HepG2 (cell line): ENCODE measurements at regions of chr12 and their contacts with region 1.

Region 1: DNA sequence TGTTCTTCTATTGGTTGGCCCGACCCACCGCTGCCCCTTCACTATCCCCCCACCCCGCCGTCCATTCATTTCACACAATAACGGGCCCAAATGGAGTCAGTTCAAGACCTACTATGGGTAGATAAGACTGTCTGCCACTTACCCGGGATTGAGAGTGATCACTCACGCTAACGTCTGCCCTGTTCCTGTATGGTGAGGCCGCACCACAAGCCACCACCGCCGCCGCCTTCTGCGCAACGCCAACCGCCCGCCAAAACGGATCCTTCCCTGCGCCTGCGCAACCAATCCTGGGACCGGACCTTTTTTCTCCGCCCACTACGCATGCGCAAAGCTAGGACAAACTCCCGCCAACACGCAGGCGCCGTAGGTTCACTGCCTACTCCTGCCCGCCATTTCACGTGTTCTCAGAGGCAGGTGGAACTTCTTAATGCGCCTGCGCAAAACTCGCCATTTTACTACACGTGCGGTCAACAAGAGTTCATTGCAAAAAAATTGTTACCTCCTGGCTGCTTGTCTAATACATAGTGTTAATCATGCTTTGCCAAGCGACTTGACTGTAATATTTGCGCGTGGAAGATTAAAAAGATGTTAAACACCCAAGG is at the start of gene CBX5:
- DNase-seq: peak; percentile 98
- ATAC-seq: peak; percentile 39
- H3K4me3 ChIP-seq: peak within 1 kb of the TSS; percentile 73 to 79 (median 76)
- H3K27ac ChIP-seq: peak within 1 kb of the TSS; percentile 96
- H3K4me1 ChIP-seq: peaks cover 64% of the 10 kb centered on the region
- H3K27me3 ChIP-seq: no peaks in the 10 kb centered on the region; a peak in 1 of 5 replicates
- CTCF ChIP-seq: no peak
- EP300 ChIP-seq: no peak
- POLR2A ChIP-seq: peak in 1 of 2 experiments; percentile 46; a peak in 2 of 4 replicates
- RAD21 ChIP-seq: 0 out of 2 replicates have a peak, but pooled peaks have one; percentile 19
- total RNA-seq, gene CBX5: 22.2 and 45.4 TPM in 2 replicates

Region 2: GRCh38 chr12:54214553-54215406 is 65.2 kb before region 1 on chr12:
- CTCF ChIA-PET with region 1: no interaction called
- POLR2A ChIA-PET with region 1: no interaction called
- in situ Hi-C with region 1: no loop called
- intact Hi-C with region 1: no loop called
- DNase-seq: peak; percentile 85
- ATAC-seq: peak; percentile 92
- H3K4me3 ChIP-seq: peak overlapping the region in 2 of 3 experiments; percentile 30 to 61; a peak in 1 of 6 replicates
- H3K27ac ChIP-seq: no peak overlapping the region
- H3K4me1 ChIP-seq: peaks cover 28% of the 10 kb centered on the region
- H3K27me3 ChIP-seq: peaks cover 0 to 28% of the 10 kb centered on the region in 2 experiments; a peak in 4 of 5 replicates
- CTCF ChIP-seq: peak; percentile 95
- EP300 ChIP-seq: no peak
- POLR2A ChIP-seq: no peak
- RAD21 ChIP-seq: peak; percentile 85

Region 3: DNA sequence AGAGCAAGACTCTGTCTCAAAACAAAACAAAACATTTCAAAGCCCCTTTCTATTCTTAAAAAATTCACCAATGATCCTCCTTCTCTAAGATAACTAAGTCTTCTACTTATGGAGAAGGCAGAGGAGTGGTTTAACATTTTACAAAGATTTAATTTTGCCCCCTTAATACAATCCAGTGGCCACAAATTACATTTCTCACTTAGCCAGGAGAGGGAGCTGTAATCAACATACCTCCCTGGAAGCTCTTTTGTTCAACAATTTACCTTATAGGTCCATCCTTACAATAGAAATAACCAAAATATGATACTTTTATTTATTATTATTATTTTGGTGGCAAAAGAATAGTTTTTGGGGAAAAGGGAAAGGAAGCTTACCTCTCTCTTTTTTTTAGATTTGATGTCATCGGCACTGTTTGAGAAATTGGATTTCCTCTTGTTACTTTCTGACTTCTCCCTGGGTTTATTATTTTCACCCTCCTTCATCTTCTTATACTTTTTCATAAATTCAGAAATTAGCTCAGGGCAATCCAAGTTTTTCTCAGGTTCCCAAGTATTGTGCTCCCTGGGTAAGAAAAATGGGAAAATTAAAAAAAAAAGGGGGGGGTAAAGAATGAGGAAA is 28.2 kb before region 1 on chr12:
- CTCF ChIA-PET with region 1: no interaction called
- POLR2A ChIA-PET with region 1: interaction called, 16 read pairs
- in situ Hi-C with region 1: no loop called
- intact Hi-C with region 1: no loop called
- DNase-seq: peak; percentile 38
- ATAC-seq: peak; percentile 52; the same call in 1 of the 3 replicates
- H3K4me3 ChIP-seq: no peak overlapping the region
- H3K27ac ChIP-seq: no peak overlapping the region
- H3K4me1 ChIP-seq: no peaks in the 10 kb centered on the region
- H3K27me3 ChIP-seq: no peaks in the 10 kb centered on the region
- CTCF ChIP-seq: peak; percentile 59
- EP300 ChIP-seq: no peak
- POLR2A ChIP-seq: no peak
- RAD21 ChIP-seq: peak; percentile 32; the same call in 1 of the 2 replicates

Region 4: DNA sequence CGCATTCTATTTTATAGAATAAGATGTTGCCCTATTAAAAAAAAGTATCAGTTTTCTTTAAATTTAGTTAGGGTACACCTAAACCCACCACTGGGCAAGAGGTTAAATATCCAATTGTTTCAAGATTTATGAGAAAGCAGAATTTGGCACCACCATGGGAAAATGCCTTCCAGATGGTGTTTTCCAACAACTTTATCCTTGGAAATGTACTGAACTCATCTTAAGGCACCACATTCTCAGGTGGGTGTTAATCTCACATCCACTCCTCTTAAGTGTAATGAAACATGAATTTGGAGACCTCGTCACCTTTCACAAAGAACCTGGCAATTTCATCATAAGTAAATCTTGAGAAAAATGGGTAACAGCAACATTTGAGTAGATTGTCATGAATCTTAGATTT is 13.1 kb before region 1 on chr12:
- CTCF ChIA-PET with region 1: no interaction called
- POLR2A ChIA-PET with region 1: interaction called, 10 read pairs
- in situ Hi-C with region 1: no loop called
- intact Hi-C with region 1: no loop called
- DNase-seq: no peak
- ATAC-seq: no peak
- H3K4me3 ChIP-seq: no peak overlapping the region
- H3K27ac ChIP-seq: no peak overlapping the region
- H3K4me1 ChIP-seq: peaks cover 11% of the 10 kb centered on the region
- H3K27me3 ChIP-seq: no peaks in the 10 kb centered on the region
- CTCF ChIP-seq: no peak
- EP300 ChIP-seq: no peak
- POLR2A ChIP-seq: no peak
- RAD21 ChIP-seq: no peak

Region 5: GRCh38 chr12:54306925-54307741 is 27.2 kb after region 1 on chr12:
- CTCF ChIA-PET with region 1: interaction called, 3 read pairs
- POLR2A ChIA-PET with region 1: interaction called, 176 read pairs
- in situ Hi-C with region 1: no loop called
- intact Hi-C with region 1: no loop called
- DNase-seq: peak; percentile 58
- ATAC-seq: peak; percentile 36
- H3K4me3 ChIP-seq: peak overlapping the region in 1 of 3 experiments; percentile 9; a peak in 1 of 6 replicates
- H3K27ac ChIP-seq: no peak overlapping the region
- H3K4me1 ChIP-seq: peaks cover 59% of the 10 kb centered on the region
- H3K27me3 ChIP-seq: no peaks in the 10 kb centered on the region
- CTCF ChIP-seq: no peak
- EP300 ChIP-seq: no peak
- POLR2A ChIP-seq: no peak
- RAD21 ChIP-seq: no peak

Region 6: DNA sequence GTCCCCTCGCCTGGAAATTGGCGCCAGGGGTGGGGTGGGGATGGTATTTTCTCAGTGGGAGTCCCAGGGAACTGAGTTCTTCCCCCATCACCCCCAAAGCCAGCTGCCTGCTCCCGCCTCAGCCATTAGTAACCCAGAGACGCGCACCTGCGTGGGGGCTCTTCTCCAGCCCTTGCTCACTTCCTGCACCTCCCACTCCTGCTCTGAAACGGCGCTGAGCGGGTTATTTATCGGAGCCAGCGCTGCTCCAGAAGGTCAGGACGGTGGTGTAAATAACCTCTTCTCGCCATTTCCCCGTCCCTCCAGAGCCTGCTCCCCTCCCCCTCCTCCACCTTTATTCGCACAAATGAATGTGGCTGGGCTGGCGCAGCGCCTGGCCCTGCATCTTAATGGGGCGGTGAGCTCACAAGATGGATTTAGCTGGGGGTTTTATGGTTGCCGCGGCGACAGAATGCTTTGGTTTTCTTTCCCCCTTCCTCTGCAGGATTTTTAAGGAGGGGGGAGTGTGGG is 72.1 kb after region 1 on chr12:
- CTCF ChIA-PET with region 1: no interaction called
- POLR2A ChIA-PET with region 1: interaction called, 53 read pairs
- in situ Hi-C with region 1: no loop called
- intact Hi-C with region 1: no loop called
- DNase-seq: no peak
- ATAC-seq: no peak
- H3K4me3 ChIP-seq: no peak overlapping the region
- H3K27ac ChIP-seq: no peak overlapping the region
- H3K4me1 ChIP-seq: peaks cover 26% of the 10 kb centered on the region
- H3K27me3 ChIP-seq: no peaks in the 10 kb centered on the region
- CTCF ChIP-seq: no peak
- EP300 ChIP-seq: no peak
- POLR2A ChIP-seq: no peak
- RAD21 ChIP-seq: no peak